ENCODE measurements at regions of chr1 and their contacts with region 1.

Region 1: GRCh38 chr1:158978730-158979129 is 31.0 kb upstream of the IFI16 start:
- DNase-seq: no peak
- H3K4me3 ChIP-seq: no peak overlapping the region
- H3K27me3 ChIP-seq: no peaks in the 10 kb centered on the region
- CTCF ChIP-seq: no peak

Region 2: DNA sequence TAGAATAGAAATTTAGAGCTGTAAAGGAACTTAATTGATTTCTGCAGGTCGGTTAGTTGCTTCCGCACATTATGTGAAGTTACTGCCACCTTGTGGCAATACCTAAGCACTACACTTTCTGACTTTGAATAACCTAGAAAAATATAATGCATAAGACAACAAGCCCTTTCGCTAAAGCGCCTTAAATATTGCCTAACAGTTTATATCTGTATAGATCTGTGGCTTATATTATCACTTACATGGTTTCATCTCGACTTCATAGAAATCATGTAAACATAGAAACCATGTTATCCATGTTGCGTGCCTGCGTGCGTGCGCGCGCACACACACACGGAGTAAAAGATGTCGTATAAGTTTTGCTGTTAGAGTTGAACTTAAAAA is 20.0 kb after region 1 on chr1:
- CTCF ChIA-PET with region 1: interaction called, 10 read pairs
- POLR2A ChIA-PET with region 1: no interaction called
- DNase-seq: peak; percentile 35
- H3K4me3 ChIP-seq: peak overlapping the region; percentile 50
- H3K27me3 ChIP-seq: 0 out of 2 replicates have a peak, but pooled peaks cover 2% of the 10 kb centered on the region
- CTCF ChIP-seq: peak; percentile 76